Right cardiac atrium (tissue), 5 donors: ENCODE measurements at regions of chr6 and their contacts with region 1.

Region 1: GRCh38 chr6:37679539-37680476 is 17.9 kb downstream of the MDGA1 start:
- DNase-seq: peak in 1 of 3 donors; percentile 68
- ATAC-seq: peak; percentile 14 to 73
- H3K4me3 ChIP-seq: no peak overlapping the region
- H3K27ac ChIP-seq: no peak overlapping the region
- H3K4me1 ChIP-seq: no peaks in the 10 kb centered on the region
- H3K27me3 ChIP-seq: no peaks in the 10 kb centered on the region

Region 2: DNA sequence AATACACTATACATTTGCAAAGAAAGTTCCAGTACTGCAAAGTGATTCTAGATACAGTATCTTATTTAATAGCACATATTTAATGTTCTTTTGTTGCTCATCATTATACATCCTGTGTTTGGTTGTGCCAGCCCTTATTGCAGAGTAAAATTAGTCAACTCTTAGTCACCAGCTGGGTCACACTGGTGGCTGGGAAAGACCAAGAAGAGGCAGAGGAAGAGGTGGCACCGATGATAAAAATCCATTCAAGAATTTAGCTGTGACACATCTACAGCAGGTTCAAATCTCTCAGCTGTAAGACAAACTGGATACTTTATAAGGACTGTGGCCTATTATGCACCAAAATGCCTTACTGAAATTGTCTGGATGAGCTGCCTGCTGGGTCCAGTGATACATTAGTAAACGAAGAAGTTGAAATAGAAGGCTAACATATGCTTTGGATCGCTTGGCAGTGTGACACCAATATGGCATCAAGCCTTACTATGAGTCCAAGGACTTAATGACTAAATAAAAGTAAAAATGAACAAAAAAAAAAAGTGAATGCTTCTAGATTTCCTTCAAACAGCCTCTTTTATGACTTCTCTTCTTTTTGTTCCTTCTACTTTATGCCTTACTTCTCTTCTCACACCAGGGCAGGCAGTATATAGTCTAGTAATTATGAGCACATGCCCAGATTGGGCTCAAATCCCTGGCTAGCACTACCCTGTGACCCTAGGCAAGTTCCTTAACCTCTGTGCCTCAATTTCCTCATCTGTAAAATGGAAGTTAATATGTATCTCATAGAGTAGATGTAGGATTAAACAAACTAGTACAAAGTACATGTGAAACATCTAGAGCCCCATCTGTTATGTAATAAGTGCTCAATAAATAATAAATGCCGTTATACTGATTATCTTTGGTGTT is 355.4 kb before region 1 on chr6:
- intact Hi-C with region 1: loop called in 1 of 4 experiments (anchors 10 kb)
- DNase-seq: no peak
- ATAC-seq: no peak
- H3K4me3 ChIP-seq: no peak overlapping the region
- H3K27ac ChIP-seq: no peak overlapping the region
- H3K4me1 ChIP-seq: no peaks in the 10 kb centered on the region
- H3K27me3 ChIP-seq: no peaks in the 10 kb centered on the region

Region 3: GRCh38 chr6:37381579-37381978 is 298.2 kb before region 1 on chr6:
- intact Hi-C with region 1: loop called in 1 of 4 experiments (anchors 10 kb)
- DNase-seq: no peak
- ATAC-seq: peak; percentile 37 to 51
- H3K4me3 ChIP-seq: no peak overlapping the region
- H3K27ac ChIP-seq: no peak overlapping the region
- H3K4me1 ChIP-seq: no peaks in the 10 kb centered on the region
- H3K27me3 ChIP-seq: no peaks in the 10 kb centered on the region